ENCODE measurements at regions of chr19 and their contacts with region 1.

Region 1: DNA sequence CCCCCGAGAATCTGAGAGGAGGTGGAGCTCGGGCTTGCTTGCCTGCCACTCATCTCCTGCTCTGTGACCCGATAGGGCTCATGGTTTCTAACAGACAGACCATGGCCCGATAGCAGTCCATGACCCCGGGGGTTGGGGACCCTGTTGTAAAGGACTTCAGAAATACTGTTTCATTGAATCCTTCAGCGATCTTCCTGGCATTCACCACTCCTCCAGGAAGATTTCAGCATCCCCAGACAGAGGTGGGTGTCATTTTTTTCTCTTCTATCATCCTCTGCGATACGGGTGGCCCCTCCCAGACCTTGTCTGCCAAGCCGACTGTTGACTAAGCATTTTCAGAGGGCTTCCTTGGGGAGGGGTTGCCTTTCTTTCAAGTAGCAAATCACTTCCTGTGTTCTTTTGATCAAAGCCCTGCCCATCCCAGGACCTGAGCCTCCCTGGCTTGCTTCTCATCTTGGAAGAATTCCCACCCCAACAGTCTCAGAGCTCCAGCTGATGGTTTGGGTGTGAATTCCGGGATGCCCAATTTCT is 1.7 kb downstream of the MYO1F start:
- DNase-seq: no peak
- H3K4me3 ChIP-seq: no peak overlapping the region
- CTCF ChIP-seq: no peak

Region 2: DNA sequence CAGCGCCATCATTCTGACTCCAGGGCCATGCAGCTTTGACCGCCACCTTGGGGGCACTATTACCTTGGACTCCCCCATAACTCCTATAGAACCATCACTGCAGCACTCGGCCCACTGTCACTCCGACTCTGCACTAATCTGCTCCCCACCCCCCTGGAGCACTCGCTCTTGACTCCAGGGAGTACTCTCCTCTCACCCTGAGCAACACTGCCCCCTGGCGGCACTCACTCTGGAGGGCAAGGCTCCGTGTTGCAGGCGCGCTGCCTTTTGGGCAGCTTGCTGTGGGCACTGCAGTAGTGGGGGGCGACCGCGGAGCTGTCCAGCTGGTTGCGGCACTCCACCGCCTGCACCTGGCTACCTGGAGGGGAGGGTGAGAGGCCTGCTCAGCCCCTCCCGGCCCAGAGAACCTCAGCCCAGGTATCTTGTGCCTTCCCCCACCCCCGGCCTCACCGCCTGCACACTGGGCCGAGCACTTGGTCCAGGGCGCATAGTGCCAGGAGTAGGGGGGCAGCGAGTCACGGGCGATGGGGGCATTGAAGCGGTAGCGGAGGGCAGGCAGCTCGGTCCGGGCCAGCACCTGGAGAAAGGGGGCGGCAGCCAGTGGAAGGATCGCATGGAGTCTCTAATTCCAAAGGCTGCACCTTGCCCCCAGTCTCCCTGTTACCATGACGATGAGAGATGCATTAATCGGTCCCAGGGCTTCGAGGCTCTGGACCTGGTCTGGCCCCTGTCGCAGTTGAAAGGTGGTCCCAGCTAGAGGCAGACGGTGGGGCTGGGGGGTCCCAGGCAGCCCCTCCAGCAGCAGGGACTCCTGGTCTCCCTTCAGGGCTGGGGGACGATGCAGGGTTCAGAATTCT is 10.6 kb after region 1 on chr19:
- CTCF ChIA-PET with region 1: interaction called, 144 read pairs
- POLR2A ChIA-PET with region 1: interaction called, 3 read pairs
- DNase-seq: no peak
- H3K4me3 ChIP-seq: no peak overlapping the region
- CTCF ChIP-seq: peak; percentile 68

Region 3: GRCh38 chr19:8806661-8807060 is 231.1 kb after region 1 on chr19:
- CTCF ChIA-PET with region 1: no interaction called
- POLR2A ChIA-PET with region 1: no interaction called
- DNase-seq: no peak
- H3K4me3 ChIP-seq: no peak overlapping the region
- CTCF ChIP-seq: no peak

Measured in AG04449 (cell line).